Breast epithelium (tissue), 4 donors: ENCODE measurements at regions of chr1 and their contacts with region 1.

Region 1: GRCh38 chr1:86833461-86834215 is 80.3 kb downstream of the SELENOF start:
- DNase-seq: peak; percentile 53 to 54
- H3K4me3 ChIP-seq: no peak overlapping the region
- H3K27ac ChIP-seq: peak overlapping the region in 1 of 2 donors; percentile 9
- H3K4me1 ChIP-seq: no peaks in the 10 kb centered on the region
- H3K27me3 ChIP-seq: no peaks in the 10 kb centered on the region
- CTCF ChIP-seq: peak in 2 of 3 donors; percentile 49 to 62
- POLR2A ChIP-seq: no peak

Region 2: GRCh38 chr1:85356130-85356529 is 1477.5 kb before region 1 on chr1:
- intact Hi-C with region 1: no loop called
- DNase-seq: no peak
- H3K4me3 ChIP-seq: no peak overlapping the region
- H3K27ac ChIP-seq: no peak overlapping the region
- H3K4me1 ChIP-seq: no peaks in the 10 kb centered on the region
- H3K27me3 ChIP-seq: no peaks in the 10 kb centered on the region
- CTCF ChIP-seq: no peak
- POLR2A ChIP-seq: no peak

Region 3: GRCh38 chr1:86972262-86972661 is 138.6 kb after region 1 on chr1:
- intact Hi-C with region 1: loop called (anchors 10 kb)
- DNase-seq: no peak
- H3K4me3 ChIP-seq: no peak overlapping the region
- H3K27ac ChIP-seq: no peak overlapping the region
- H3K4me1 ChIP-seq: no peaks in the 10 kb centered on the region
- H3K27me3 ChIP-seq: no peaks in the 10 kb centered on the region
- CTCF ChIP-seq: no peak
- POLR2A ChIP-seq: no peak